Breast epithelium (tissue), 4 donors: ENCODE measurements at regions of chr10 and their contacts with region 1.

Region 1: DNA sequence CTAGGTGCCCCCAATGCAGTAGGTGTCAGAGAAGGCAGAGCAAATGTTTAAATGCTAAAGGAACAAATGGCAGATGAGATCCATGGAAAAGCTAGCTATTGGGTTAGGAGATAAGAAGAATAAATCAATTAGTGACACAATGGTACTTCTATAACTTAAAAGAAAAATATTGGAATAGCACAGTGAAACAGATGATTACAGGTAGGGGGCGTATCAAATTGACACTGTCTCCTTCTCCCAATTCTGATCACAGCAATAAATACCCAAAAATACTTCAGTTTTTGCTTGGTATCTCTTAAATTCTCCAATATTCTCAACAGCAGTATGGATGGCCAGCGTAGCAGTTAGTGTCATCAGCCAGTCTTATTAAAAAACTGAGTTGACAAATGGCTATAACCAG is 5.2 kb downstream of the FRA10AC1 start:
- DNase-seq: no peak
- H3K4me3 ChIP-seq: no peak overlapping the region
- H3K27ac ChIP-seq: no peak overlapping the region
- H3K4me1 ChIP-seq: no peaks in the 10 kb centered on the region
- H3K27me3 ChIP-seq: no peaks in the 10 kb centered on the region
- CTCF ChIP-seq: no peak
- POLR2A ChIP-seq: no peak

Region 2: GRCh38 chr10:93178226-93178625 is 519.0 kb before region 1 on chr10:
- intact Hi-C with region 1: loop called (anchors 5 kb)
- DNase-seq: no peak
- H3K4me3 ChIP-seq: no peak overlapping the region
- H3K27ac ChIP-seq: no peak overlapping the region
- H3K4me1 ChIP-seq: peaks cover 0 to 8% of the 10 kb centered on the region in 2 donors
- H3K27me3 ChIP-seq: no peaks in the 10 kb centered on the region
- CTCF ChIP-seq: no peak
- POLR2A ChIP-seq: no peak

Region 3: GRCh38 chr10:93672022-93672678 is 25.1 kb before region 1 on chr10:
- intact Hi-C with region 1: no loop called
- DNase-seq: no peak
- H3K4me3 ChIP-seq: no peak overlapping the region
- H3K27ac ChIP-seq: no peak overlapping the region
- H3K4me1 ChIP-seq: no peaks in the 10 kb centered on the region
- H3K27me3 ChIP-seq: no peaks in the 10 kb centered on the region
- CTCF ChIP-seq: no peak
- POLR2A ChIP-seq: no peak

Region 4: DNA sequence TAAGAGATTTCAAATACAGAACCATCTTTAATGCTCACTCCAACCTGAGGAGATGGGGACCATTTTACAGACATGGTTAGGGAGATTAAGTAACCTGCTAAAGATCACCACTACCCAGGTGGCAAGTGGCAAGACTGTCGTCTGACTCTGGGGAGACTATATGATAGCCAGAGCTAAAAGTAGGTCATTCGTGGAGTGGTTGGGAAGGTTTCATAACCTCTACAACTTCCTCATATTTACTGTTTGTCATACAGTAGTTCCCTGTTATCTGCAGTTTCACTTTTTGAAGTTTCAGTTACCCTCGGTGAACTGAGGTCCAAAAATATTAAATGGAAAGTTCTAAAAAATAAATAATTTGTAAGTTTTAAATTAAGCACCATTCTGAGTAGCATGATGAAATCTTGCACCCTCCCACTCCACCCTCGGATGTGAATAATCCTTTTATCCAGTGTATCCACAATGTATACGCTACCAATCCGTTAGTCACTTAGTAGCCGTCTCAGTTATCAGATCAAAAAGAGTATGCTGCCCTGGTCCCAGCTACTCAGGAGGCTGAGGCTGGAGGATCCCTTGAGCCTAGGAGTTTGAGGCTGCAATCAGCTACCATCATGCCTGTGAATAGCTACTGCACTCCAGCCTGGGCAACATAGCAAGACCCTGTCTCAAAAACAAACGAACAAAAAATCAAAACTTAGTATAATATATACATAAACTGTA is 45.6 kb after region 1 on chr10:
- intact Hi-C with region 1: no loop called
- DNase-seq: no peak
- H3K4me3 ChIP-seq: no peak overlapping the region
- H3K27ac ChIP-seq: no peak overlapping the region
- H3K4me1 ChIP-seq: no peaks in the 10 kb centered on the region
- H3K27me3 ChIP-seq: no peaks in the 10 kb centered on the region
- CTCF ChIP-seq: no peak
- POLR2A ChIP-seq: no peak